Activated naive CD4-positive, alpha-beta T cell treated with anti-CD3 and anti-CD28 coated beads for 36 hours (primary cell): ENCODE measurements at regions of chr2 and their contacts with region 1.

Region 1: GRCh38 chr2:230658877-230659652 is 53.6 kb upstream of the CAB39 start:
- DNase-seq: peak; percentile 87
- H3K4me3 Mint-ChIP-seq: peak overlapping the region; percentile 73
- H3K27ac Mint-ChIP-seq: peak overlapping the region; percentile 94
- H3K4me1 Mint-ChIP-seq: peaks cover 86% of the 10 kb centered on the region
- H3K27me3 Mint-ChIP-seq: no peaks in the 10 kb centered on the region

Region 2: GRCh38 chr2:230225486-230225885 is 433.6 kb before region 1 on chr2 and contains the start of gene SP140:
- CTCF ChIA-PET with region 1: no interaction called
- intact Hi-C with region 1: loop called (anchors 2 kb)
- DNase-seq: peak; percentile 87
- H3K4me3 Mint-ChIP-seq: peak within 1 kb of the TSS; percentile 81
- H3K27ac Mint-ChIP-seq: peak within 1 kb of the TSS; percentile 97
- H3K4me1 Mint-ChIP-seq: peaks cover 62% of the 10 kb centered on the region
- H3K27me3 Mint-ChIP-seq: no peaks in the 10 kb centered on the region
- total RNA-seq, gene SP140: 95.1 to 98.8 TPM

Region 3: DNA sequence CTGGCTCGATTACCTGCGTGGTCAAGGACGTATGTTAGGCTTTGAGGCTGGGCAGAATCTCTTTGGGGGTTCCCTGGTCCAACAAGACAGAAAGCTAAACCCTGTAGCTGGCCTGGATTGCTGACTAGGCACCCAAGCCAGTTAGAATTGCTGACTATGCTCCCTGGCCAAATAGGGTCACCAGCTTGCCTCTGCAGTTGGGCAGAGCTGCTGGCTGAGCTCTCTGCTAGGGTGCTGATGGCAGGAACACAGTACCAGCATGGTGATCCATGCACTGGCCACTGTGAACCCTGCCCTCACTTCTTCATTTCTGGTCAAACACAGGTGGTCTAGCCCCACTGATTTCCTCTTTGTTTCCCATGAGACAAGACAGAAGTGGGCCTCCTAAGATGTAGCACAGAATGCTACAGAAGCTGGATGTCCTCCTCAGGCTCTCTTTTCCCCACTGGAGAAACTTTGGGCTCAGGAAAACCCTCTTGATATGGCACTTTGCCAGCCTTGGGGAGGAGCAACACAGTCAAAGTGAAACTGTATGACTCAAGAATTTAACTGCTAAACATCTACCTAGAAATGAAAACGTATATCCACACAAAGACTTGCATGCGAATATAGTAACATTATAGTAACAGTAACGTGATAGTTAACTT is 311.3 kb before region 1 on chr2:
- CTCF ChIA-PET with region 1: no interaction called
- intact Hi-C with region 1: loop called (anchors 2 kb)
- DNase-seq: peak; percentile 76
- H3K4me3 Mint-ChIP-seq: no peak overlapping the region
- H3K27ac Mint-ChIP-seq: peak overlapping the region; percentile 85
- H3K4me1 Mint-ChIP-seq: peaks cover 71% of the 10 kb centered on the region
- H3K27me3 Mint-ChIP-seq: no peaks in the 10 kb centered on the region

Region 4: GRCh38 chr2:230525682-230526081 is 133.4 kb before region 1 on chr2:
- CTCF ChIA-PET with region 1: no interaction called
- intact Hi-C with region 1: no loop called
- DNase-seq: no peak
- H3K4me3 Mint-ChIP-seq: no peak overlapping the region
- H3K27ac Mint-ChIP-seq: no peak overlapping the region
- H3K4me1 Mint-ChIP-seq: peaks cover 4% of the 10 kb centered on the region
- H3K27me3 Mint-ChIP-seq: no peaks in the 10 kb centered on the region

Region 5: GRCh38 chr2:230582851-230583283 is 76.2 kb before region 1 on chr2:
- CTCF ChIA-PET with region 1: no interaction called
- intact Hi-C with region 1: loop called (anchors 1 kb)
- DNase-seq: peak; percentile 58
- H3K4me3 Mint-ChIP-seq: no peak overlapping the region
- H3K27ac Mint-ChIP-seq: peak overlapping the region; percentile 38
- H3K4me1 Mint-ChIP-seq: peaks cover 23% of the 10 kb centered on the region
- H3K27me3 Mint-ChIP-seq: no peaks in the 10 kb centered on the region

Region 6: DNA sequence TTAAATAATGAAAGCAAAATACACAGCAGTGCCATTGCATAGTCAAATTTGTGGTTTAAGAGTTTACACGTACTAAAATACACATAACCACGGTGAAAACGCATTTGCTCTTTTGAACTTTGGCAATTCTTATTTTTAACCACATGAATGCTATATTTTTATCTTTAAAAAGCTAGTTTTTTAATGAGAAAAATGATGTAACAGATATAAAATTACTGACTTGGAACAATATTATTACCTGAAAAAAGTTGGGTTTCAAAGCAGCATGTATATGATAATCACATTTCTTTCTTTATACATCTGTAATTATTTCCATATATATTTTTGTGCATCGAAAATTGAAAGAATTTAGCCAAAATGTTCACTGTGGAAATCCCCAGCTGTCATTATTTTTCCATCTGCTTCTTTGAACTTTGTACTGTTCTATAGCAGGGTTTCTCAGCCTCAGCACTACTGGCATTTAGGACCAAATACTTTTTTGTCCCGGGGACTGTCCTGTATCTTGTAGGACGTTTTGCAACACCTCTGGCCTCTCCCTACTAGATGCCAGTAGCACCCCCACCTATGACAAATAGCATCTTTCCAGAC is 22.3 kb before region 1 on chr2:
- CTCF ChIA-PET with region 1: interaction called, 5 read pairs
- intact Hi-C with region 1: loop called (anchors 1 kb)
- DNase-seq: peak; percentile 49
- H3K4me3 Mint-ChIP-seq: no peak overlapping the region
- H3K27ac Mint-ChIP-seq: peak overlapping the region; percentile 86
- H3K4me1 Mint-ChIP-seq: peaks cover 26% of the 10 kb centered on the region
- H3K27me3 Mint-ChIP-seq: no peaks in the 10 kb centered on the region

Region 7: GRCh38 chr2:230712443-230713330 is 53.6 kb after region 1 on chr2 and contains the start of gene CAB39:
- CTCF ChIA-PET with region 1: interaction called, 6 read pairs
- intact Hi-C with region 1: loop called (anchors 1 kb)
- DNase-seq: peak; percentile 84
- H3K4me3 Mint-ChIP-seq: peak within 1 kb of the TSS; percentile 90
- H3K27ac Mint-ChIP-seq: peak within 1 kb of the TSS; percentile 94
- H3K4me1 Mint-ChIP-seq: peaks cover 40% of the 10 kb centered on the region
- H3K27me3 Mint-ChIP-seq: no peaks in the 10 kb centered on the region
- total RNA-seq, gene CAB39: 86.6 to 97.5 TPM

Region 8: DNA sequence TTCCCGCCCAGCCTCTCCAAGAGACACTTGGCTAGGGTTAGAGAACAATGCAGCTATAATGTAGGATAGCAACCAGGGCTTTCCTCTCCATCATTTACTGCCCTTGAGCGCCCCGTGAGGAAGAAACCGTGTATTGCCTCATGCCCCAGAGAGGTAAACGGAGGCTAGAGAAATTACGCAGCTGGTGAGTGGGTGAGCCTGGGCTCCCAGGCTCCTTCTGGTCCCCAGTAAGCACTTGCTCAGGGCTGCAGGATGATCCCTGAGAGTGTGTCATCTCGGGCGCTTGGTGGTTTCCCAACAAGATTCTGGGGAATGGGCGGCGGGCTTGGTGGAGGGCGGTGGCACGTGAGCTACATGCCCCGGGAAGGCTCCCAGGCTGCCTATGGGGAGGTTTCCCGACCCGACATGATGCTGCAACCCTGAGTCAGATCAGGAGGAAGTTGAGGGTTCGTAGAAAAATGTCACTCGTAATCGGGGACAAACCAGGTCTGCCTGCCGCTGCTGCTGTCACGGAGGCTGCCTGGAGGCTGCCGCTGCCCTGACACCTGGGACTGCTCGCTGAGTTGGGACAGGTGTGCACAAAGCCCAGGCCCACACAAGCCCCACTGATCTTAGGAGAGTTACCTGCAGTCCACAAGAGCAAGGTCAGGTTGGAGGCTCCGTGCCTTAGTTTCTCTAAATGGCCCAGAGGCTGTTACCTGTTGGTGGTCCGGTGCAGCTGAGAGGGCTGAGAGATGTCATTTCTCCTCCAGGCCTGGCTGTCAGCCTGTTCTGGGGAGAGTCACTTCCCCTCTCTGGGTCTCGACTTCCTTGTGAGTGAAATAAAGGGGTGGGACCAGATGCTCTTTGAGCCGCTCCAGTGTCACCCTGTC is 265.6 kb after region 1 on chr2 and contains the start of gene GPR55:
- CTCF ChIA-PET with region 1: no interaction called
- intact Hi-C with region 1: loop called (anchors 2 kb)
- DNase-seq: peak; percentile 83
- H3K4me3 Mint-ChIP-seq: peak within 1 kb of the TSS; percentile 60
- H3K27ac Mint-ChIP-seq: peak within 1 kb of the TSS; percentile 91
- H3K4me1 Mint-ChIP-seq: peaks cover 63% of the 10 kb centered on the region
- H3K27me3 Mint-ChIP-seq: peaks cover 2% of the 10 kb centered on the region
- total RNA-seq, gene GPR55: 0.35 to 0.43 TPM